ENCODE measurements at regions of chr3 and their contacts with region 1.

Region 1: GRCh38 chr3:119891944-119892721 is 110.2 kb downstream of the NR1I2 start:
- DNase-seq: peak in 1 of 3 donors; percentile 18
- ATAC-seq: peak; percentile 74 to 79
- H3K4me3 ChIP-seq: no peak overlapping the region
- H3K27ac ChIP-seq: no peak overlapping the region
- H3K4me1 ChIP-seq: no peaks in the 10 kb centered on the region
- H3K27me3 ChIP-seq: no peaks in the 10 kb centered on the region

Region 2: GRCh38 chr3:119819806-119820205 is 72.3 kb before region 1 on chr3:
- intact Hi-C with region 1: no loop called
- DNase-seq: no peak
- ATAC-seq: no peak
- H3K4me3 ChIP-seq: no peak overlapping the region
- H3K27ac ChIP-seq: no peak overlapping the region
- H3K4me1 ChIP-seq: no peaks in the 10 kb centered on the region
- H3K27me3 ChIP-seq: no peaks in the 10 kb centered on the region

Region 3: GRCh38 chr3:120095226-120095978 is 203.3 kb after region 1 on chr3:
- intact Hi-C with region 1: loop called in 2 of 4 experiments (anchors 10 kb)
- DNase-seq: peak; percentile 93 to 96 (median 95)
- ATAC-seq: peak; percentile 75 to 81
- H3K4me3 ChIP-seq: peak overlapping the region; percentile 74
- H3K27ac ChIP-seq: peak overlapping the region; percentile 98
- H3K4me1 ChIP-seq: no peaks in the 10 kb centered on the region
- H3K27me3 ChIP-seq: no peaks in the 10 kb centered on the region

Region 4: GRCh38 chr3:120182724-120183524 is 290.8 kb after region 1 on chr3:
- intact Hi-C with region 1: loop called in 2 of 4 experiments (anchors 10 kb)
- DNase-seq: no peak
- ATAC-seq: no peak
- H3K4me3 ChIP-seq: no peak overlapping the region
- H3K27ac ChIP-seq: no peak overlapping the region
- H3K4me1 ChIP-seq: no peaks in the 10 kb centered on the region
- H3K27me3 ChIP-seq: no peaks in the 10 kb centered on the region

Region 5: GRCh38 chr3:120198305-120198878 is 306.3 kb after region 1 on chr3:
- intact Hi-C with region 1: loop called in 1 of 4 experiments (anchors 10 kb)
- DNase-seq: no peak
- ATAC-seq: peak in 1 of 2 donors; percentile 39
- H3K4me3 ChIP-seq: no peak overlapping the region
- H3K27ac ChIP-seq: no peak overlapping the region
- H3K4me1 ChIP-seq: no peaks in the 10 kb centered on the region
- H3K27me3 ChIP-seq: no peaks in the 10 kb centered on the region

Measured in right cardiac atrium (tissue), 5 donors.